ENCODE measurements at regions of chr3 and their contacts with region 1.

Region 1: GRCh38 chr3:190701096-190701532 is 161.4 kb downstream of the GMNC start:
- DNase-seq: peak; percentile 87
- H3K4me3 ChIP-seq: no peak overlapping the region
- H3K27ac ChIP-seq: peak overlapping the region; percentile 11
- H3K4me1 ChIP-seq: peaks cover 45% of the 10 kb centered on the region
- H3K27me3 ChIP-seq: no peaks in the 10 kb centered on the region
- CTCF ChIP-seq: peak; percentile 88

Region 2: GRCh38 chr3:189502676-189503257 is 1198.3 kb before region 1 on chr3:
- CTCF ChIA-PET with region 1: no interaction called
- POLR2A ChIA-PET with region 1: no interaction called
- intact Hi-C with region 1: loop called (anchors 5 kb)
- DNase-seq: no peak
- H3K4me3 ChIP-seq: no peak overlapping the region
- H3K27ac ChIP-seq: peak overlapping the region; percentile 99
- H3K4me1 ChIP-seq: peaks cover 51% of the 10 kb centered on the region
- H3K27me3 ChIP-seq: no peaks in the 10 kb centered on the region
- CTCF ChIP-seq: no peak

Region 3: GRCh38 chr3:190384241-190384863 is 316.8 kb before region 1 on chr3:
- CTCF ChIA-PET with region 1: no interaction called
- POLR2A ChIA-PET with region 1: no interaction called
- intact Hi-C with region 1: loop called (anchors 2 kb)
- DNase-seq: peak; percentile 88
- H3K4me3 ChIP-seq: no peak overlapping the region
- H3K27ac ChIP-seq: peak overlapping the region; percentile 36
- H3K4me1 ChIP-seq: peaks cover 81% of the 10 kb centered on the region
- H3K27me3 ChIP-seq: no peaks in the 10 kb centered on the region
- CTCF ChIP-seq: peak; percentile 80

Region 4: GRCh38 chr3:190533511-190534277 is 167.4 kb before region 1 on chr3:
- CTCF ChIA-PET with region 1: no interaction called
- POLR2A ChIA-PET with region 1: interaction called, 15 read pairs
- intact Hi-C with region 1: no loop called
- DNase-seq: peak; percentile 95
- H3K4me3 ChIP-seq: peak overlapping the region; percentile 31
- H3K27ac ChIP-seq: peak overlapping the region; percentile 93
- H3K4me1 ChIP-seq: peaks cover 94% of the 10 kb centered on the region
- H3K27me3 ChIP-seq: no peaks in the 10 kb centered on the region
- CTCF ChIP-seq: no peak

Region 5: DNA sequence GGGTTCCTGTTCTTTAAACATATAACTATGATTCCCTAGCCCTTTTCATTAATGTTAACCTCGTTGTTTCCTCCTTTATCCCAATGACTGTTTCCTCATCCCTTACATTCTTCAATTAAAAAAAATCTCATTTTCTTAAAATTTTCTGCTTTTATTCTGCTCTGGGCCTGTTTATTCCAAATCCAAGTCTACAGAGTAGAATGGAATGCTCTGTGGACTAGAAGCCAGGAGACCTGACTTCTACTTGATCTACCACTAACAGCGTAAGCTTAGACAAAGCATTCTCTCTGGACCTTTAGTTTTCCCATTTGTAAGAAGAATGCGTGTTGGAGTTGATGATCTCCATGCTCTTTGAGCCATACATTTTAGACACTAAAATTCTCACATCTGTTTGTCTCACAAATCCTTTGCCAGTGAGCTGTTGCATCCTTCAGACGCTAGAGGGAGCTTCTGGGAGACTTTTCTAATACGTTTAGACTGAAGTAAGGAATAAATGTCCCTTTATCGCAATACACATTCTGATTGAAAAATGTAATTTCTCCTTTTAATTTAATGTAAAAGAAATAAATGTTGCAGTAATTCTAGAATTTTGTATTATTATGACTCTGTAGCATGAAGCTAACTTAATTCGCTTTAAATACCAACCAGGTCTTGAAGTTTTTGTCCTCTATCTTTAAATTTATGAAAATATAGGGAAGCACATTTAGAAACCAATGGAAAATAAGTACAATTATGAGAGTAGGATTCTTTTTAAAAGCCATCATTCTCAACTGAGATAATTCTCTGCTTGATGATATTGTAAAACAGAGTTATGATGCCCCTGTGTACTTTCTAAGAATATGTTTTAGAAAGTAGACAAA is 183.1 kb after region 1 on chr3:
- CTCF ChIA-PET with region 1: interaction called, 3 read pairs
- POLR2A ChIA-PET with region 1: no interaction called
- intact Hi-C with region 1: loop called (anchors 10 kb)
- DNase-seq: peak; percentile 90
- H3K4me3 ChIP-seq: no peak overlapping the region
- H3K27ac ChIP-seq: no peak overlapping the region
- H3K4me1 ChIP-seq: peaks cover 14% of the 10 kb centered on the region
- H3K27me3 ChIP-seq: no peaks in the 10 kb centered on the region
- CTCF ChIP-seq: peak; percentile 97

Region 6: DNA sequence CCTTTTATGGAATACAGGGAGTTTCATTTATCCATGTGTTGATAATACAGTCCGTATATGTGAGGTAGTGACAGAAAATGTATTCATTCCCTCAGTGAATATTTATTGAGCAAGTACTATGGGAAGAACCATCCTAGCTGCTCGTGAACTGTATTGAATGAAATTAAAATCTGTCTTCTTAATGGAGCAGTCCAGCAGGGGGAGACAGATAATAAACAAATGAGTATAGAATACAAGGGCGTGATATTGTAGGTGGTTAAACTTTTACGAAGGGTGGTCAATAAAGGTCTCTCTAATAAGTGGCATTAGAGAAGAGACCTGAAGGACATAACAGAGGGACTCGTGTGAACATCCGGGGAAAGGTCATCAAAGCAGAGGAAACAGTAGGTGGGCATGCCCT is 435.2 kb after region 1 on chr3:
- CTCF ChIA-PET with region 1: no interaction called
- POLR2A ChIA-PET with region 1: no interaction called
- intact Hi-C with region 1: loop called (anchors 5 kb)
- DNase-seq: peak; percentile 72
- H3K4me3 ChIP-seq: no peak overlapping the region
- H3K27ac ChIP-seq: no peak overlapping the region
- H3K4me1 ChIP-seq: no peaks in the 10 kb centered on the region
- H3K27me3 ChIP-seq: no peaks in the 10 kb centered on the region
- CTCF ChIP-seq: peak; percentile 72